Testis (tissue), 5 donors: ENCODE measurements at regions of chr9 and their contacts with region 1.

Region 1: DNA sequence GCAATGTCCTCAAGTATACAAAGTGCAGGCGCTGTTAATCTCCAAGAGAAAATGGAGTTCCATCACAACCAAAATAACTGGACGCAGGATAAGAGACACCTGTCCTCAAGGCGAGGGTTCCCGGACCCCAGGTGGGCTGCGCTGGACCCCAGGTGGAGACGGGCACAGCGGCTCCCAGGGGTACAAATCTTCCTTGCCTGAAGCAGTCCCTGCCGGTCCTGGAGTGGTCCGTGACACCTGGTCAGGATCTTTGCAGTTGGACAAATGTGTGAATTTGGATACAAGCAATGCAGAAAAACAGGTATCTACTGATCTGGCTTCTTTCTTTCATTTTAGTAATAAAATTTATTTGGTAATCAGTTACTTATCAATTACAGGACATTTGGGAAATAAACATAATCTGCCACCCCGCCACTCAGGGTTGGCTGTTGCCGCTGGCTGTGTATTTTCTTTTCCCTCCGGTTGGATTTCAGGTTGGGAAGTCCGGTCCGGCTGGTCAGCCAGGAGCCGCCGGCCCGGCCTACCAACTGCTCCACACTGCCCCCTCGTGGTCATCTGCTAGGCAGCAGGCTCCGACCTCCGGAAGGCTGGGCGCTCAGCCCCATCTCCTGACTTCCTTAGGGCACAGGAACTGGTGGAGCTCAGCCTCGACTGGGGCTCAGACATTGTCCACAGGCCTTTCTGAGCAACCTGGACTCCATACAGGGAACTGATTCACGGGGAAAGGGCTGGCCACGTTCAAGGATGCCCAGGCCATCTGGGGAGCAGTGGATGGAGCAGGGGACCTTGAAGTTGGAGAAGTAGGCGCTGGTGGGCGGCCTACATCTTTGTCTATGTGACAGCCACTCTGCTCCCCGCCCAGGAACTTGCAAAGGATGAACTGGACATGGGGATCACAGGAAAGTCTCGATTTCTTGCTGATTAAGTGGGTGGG is 43.4 kb downstream of the NXNL2 start:
- DNase-seq: peak; percentile 90
- H3K4me3 ChIP-seq: no peak overlapping the region
- H3K27ac ChIP-seq: no peak overlapping the region
- H3K4me1 ChIP-seq: peaks cover 6% of the 10 kb centered on the region
- H3K27me3 ChIP-seq: no peaks in the 10 kb centered on the region
- CTCF ChIP-seq: peak; percentile 90 to 98 (median 94)
- POLR2A ChIP-seq: no peak

Region 2: DNA sequence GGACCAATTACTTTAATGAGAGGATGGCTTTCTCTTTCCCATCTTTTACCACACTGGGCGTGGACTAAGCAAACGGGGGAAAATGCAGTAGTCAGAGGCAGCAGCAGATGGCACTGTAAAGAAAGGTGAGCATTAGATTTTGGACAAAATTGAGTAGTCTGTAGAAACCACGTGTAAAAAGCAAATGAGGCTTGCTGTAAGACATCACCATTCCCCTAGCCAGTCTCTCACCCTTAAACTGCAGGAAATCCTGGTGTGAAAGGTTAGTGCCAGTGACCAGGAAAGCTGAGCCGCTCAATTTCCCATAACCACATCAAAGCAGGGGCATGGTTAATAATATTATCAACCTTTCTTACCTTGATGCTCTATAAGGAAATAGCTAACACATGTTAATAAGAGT is 471.9 kb before region 1 on chr9:
- intact Hi-C with region 1: loop called (anchors 10 kb)
- DNase-seq: peak; percentile 47
- H3K4me3 ChIP-seq: no peak overlapping the region
- H3K27ac ChIP-seq: no peak overlapping the region
- H3K4me1 ChIP-seq: no peaks in the 10 kb centered on the region
- H3K27me3 ChIP-seq: no peaks in the 10 kb centered on the region
- CTCF ChIP-seq: peak; percentile 35 to 51 (median 45)
- POLR2A ChIP-seq: no peak